ENCODE measurements at regions of chr10 and their contacts with region 1.

Region 1: DNA sequence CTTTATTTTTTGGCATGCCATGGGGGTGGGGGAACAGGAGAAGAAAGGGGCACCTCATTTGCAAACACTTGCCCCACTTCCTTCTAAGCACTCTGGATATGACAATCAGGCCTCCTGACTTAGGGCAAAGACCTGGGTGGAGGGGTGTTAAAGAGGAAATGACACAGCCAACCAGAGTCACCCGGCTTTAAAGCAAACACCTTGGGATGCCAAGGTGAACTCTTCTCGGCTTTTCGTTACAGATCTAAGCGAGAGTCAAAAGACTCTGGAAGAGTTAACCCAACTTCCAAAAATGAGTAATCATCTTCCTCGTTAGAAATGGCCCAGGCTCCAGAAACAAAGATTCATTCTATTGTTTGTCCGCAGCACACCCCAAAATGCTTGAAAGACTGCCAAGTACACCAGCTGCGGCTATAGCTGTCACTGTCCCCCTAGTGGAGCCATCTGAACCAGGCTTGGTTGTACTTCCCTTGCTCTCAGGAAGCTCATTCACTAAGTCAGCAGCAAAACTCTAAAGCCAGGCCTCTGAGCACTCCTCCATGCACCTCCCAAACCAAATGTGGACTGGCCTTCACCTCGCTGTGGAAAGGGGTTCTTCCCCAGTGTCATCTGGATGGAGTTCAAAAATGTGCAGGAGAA is 24.8 kb downstream of the FAM53B start:
- DNase-seq: peak; percentile 81
- ATAC-seq: peak; percentile 67
- H3K4me3 Mint-ChIP-seq: peak overlapping the region; percentile 71
- H3K27ac Mint-ChIP-seq: peak overlapping the region; percentile 84
- H3K4me1 Mint-ChIP-seq: peaks cover 87% of the 10 kb centered on the region
- H3K27me3 Mint-ChIP-seq: no peaks in the 10 kb centered on the region

Region 2: GRCh38 chr10:124647421-124648130 is 71.8 kb before region 1 on chr10:
- CTCF ChIA-PET with region 1: interaction called, 63 read pairs
- POLR2A ChIA-PET with region 1: interaction called, 6 read pairs
- DNase-seq: peak; percentile 87
- ATAC-seq: peak; percentile 80
- H3K4me3 Mint-ChIP-seq: peak overlapping the region; percentile 70
- H3K27ac Mint-ChIP-seq: peak overlapping the region; percentile 92
- H3K4me1 Mint-ChIP-seq: peaks cover 78% of the 10 kb centered on the region
- H3K27me3 Mint-ChIP-seq: no peaks in the 10 kb centered on the region

Region 3: GRCh38 chr10:124688889-124689670 is 30.3 kb before region 1 on chr10:
- CTCF ChIA-PET with region 1: interaction called, 136 read pairs
- POLR2A ChIA-PET with region 1: interaction called, 29 read pairs
- DNase-seq: peak; percentile 67
- ATAC-seq: peak; percentile 92
- H3K4me3 Mint-ChIP-seq: peak overlapping the region; percentile 10
- H3K27ac Mint-ChIP-seq: peak overlapping the region; percentile 76
- H3K4me1 Mint-ChIP-seq: peaks cover 64% of the 10 kb centered on the region
- H3K27me3 Mint-ChIP-seq: no peaks in the 10 kb centered on the region

Region 4: GRCh38 chr10:124703778-124704427 is 15.4 kb before region 1 on chr10:
- CTCF ChIA-PET with region 1: interaction called, 156 read pairs
- POLR2A ChIA-PET with region 1: interaction called, 28 read pairs
- DNase-seq: no peak
- ATAC-seq: no peak
- H3K4me3 Mint-ChIP-seq: no peak overlapping the region
- H3K27ac Mint-ChIP-seq: peak overlapping the region; percentile 86
- H3K4me1 Mint-ChIP-seq: peaks cover 88% of the 10 kb centered on the region
- H3K27me3 Mint-ChIP-seq: no peaks in the 10 kb centered on the region

Region 5: DNA sequence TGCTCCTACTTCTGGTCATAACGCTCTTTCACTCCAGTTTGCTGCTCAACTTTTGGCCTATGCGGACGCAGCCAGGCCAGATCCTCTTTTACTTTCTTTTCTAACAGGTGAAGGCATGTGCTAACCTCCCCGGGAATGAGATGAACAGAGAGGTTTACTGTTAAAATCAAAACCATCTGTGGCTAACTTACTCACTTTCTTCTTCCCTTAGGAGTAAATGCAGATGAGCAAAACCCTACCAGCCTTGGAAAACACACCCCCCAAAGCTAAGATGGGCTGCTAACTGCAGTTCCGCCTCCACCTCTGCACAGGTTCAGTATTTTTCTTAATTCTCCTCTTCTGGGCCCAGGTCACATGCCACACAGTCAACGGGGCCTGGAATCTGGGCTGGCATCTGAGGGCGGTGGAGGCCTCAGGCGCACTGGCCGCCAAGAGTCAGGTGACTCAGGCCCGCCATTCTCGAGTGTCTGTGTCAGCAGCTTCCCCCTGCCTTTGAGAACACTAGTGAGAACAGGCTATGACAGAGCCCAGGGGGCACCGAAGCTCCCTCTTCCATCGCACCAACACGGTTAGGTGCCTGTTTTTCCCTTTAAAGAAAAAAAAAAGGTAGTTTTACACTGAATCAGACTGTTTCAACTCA is 13.7 kb after region 1 on chr10:
- CTCF ChIA-PET with region 1: interaction called, 92 read pairs
- POLR2A ChIA-PET with region 1: interaction called, 12 read pairs
- DNase-seq: no peak
- ATAC-seq: peak; percentile 46
- H3K4me3 Mint-ChIP-seq: peak overlapping the region; percentile 12
- H3K27ac Mint-ChIP-seq: peak overlapping the region; percentile 64
- H3K4me1 Mint-ChIP-seq: peaks cover 88% of the 10 kb centered on the region
- H3K27me3 Mint-ChIP-seq: no peaks in the 10 kb centered on the region

Region 6: DNA sequence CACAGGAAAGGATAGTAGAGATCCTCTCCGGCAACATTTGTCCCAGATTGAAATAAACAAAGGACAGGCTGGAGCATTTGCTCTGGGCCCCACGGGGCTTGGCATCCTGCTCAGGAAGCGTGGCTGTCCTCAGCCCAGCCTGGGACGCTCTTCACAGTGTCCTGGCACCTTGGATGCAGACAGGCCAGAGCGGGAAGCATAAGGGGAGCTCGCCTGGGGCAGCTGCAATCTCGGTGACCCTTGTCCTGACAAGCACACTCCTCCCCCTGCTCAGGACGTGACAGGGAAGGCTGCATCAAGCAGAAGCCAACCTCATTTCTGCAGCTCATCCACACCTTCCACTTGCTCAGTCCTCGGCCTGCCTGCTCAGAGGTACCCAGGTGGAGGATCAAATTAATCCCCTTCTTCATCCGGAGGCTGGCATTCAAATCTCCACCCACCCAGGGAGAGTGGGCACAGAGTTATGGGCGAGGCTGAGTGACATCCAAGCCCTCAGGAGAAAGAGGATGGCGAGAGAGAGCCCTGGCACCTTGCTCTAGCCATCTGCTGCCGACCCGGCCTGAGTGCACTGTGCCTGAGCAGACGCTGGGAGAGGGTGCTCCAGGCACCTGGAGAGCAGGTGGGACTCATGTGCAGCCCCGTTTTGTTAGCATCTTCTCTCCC is 129.9 kb after region 1 on chr10:
- CTCF ChIA-PET with region 1: no interaction called
- POLR2A ChIA-PET with region 1: no interaction called
- DNase-seq: no peak
- ATAC-seq: no peak
- H3K4me3 Mint-ChIP-seq: no peak overlapping the region
- H3K27ac Mint-ChIP-seq: no peak overlapping the region
- H3K4me1 Mint-ChIP-seq: no peaks in the 10 kb centered on the region
- H3K27me3 Mint-ChIP-seq: peaks cover 2% of the 10 kb centered on the region

Measured in activated CD8-positive, alpha-beta T cell treated with anti-CD3 and anti-CD28 coated beads, Interleukin-2, amount 10 ng/mL, durations not matched to agents 7 days and 5 days (primary cell).